CD8-positive, alpha-beta memory T cell (primary cell): ENCODE measurements at regions of chr5 and their contacts with region 1.

Region 1: GRCh38 chr5:141811287-141812155 is 66.7 kb downstream of the PCDH1 start:
- DNase-seq: peak in 3 of 5 donors; percentile 2 to 12 (median 6)
- H3K4me3 ChIP-seq: no peak overlapping the region
- H3K4me3 Mint-ChIP-seq: no peak overlapping the region
- H3K27ac ChIP-seq: no peak overlapping the region
- H3K27ac Mint-ChIP-seq: no peak overlapping the region
- H3K4me1 ChIP-seq: no peaks in the 10 kb centered on the region
- H3K4me1 Mint-ChIP-seq: no peaks in the 10 kb centered on the region
- H3K27me3 ChIP-seq: peaks cover 17% of the 10 kb centered on the region
- H3K27me3 Mint-ChIP-seq: peaks cover 25 to 76% of the 10 kb centered on the region in 2 donors

Region 2: DNA sequence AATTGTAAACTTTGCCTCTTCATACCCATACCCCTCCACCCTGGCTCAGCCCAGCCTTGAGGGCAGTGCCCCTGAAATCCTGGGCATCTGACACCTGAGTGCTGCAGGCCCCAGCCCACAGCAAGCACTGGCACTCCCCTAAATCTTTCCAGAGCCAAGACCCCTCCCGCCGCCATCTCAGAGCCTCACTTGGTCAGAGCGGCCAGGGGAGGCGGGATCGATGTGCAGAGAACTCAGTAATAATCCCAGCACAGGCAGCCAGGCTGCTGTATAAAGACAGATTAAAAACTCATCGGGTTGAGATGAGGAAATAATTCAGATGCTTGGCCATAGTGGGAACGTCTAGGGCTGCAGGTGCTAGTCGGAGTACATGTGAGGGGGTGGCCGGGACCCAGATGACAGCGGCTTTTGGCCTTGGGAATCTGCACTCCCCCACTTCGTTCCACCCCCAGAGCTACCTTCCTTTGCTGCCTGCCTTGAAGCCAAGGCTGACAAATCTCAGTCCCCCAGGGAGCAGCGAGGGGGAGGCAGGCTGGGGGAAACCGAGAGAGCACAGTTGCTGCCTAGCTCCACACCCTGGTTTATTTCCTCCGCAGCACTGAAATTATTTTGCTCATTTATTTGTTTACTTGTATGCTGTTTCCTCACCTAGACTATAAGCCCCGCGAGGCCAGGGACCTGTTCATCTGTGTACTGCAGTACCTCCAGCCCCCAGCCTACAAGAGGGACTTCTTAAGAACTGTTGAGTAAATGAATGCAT is 110.0 kb before region 1 on chr5:
- CTCF ChIA-PET with region 1: interaction called, 11 read pairs
- POLR2A ChIA-PET with region 1: no interaction called
- DNase-seq: no peak
- H3K4me3 ChIP-seq: peak overlapping the region; percentile 16
- H3K4me3 Mint-ChIP-seq: peak overlapping the region in 4 of 7 donors; percentile 11 to 91 (median 62)
- H3K27ac ChIP-seq: no peak overlapping the region
- H3K27ac Mint-ChIP-seq: peak overlapping the region in 6 of 8 donors; percentile 20 to 98 (median 63)
- H3K4me1 ChIP-seq: peaks cover 12% of the 10 kb centered on the region
- H3K4me1 Mint-ChIP-seq: peaks cover 12 to 20% (median 13%) of the 10 kb centered on the region in 3 donors
- H3K27me3 ChIP-seq: peaks cover 18% of the 10 kb centered on the region
- H3K27me3 Mint-ChIP-seq: peaks cover 25 to 40% of the 10 kb centered on the region in 2 donors

Region 3: DNA sequence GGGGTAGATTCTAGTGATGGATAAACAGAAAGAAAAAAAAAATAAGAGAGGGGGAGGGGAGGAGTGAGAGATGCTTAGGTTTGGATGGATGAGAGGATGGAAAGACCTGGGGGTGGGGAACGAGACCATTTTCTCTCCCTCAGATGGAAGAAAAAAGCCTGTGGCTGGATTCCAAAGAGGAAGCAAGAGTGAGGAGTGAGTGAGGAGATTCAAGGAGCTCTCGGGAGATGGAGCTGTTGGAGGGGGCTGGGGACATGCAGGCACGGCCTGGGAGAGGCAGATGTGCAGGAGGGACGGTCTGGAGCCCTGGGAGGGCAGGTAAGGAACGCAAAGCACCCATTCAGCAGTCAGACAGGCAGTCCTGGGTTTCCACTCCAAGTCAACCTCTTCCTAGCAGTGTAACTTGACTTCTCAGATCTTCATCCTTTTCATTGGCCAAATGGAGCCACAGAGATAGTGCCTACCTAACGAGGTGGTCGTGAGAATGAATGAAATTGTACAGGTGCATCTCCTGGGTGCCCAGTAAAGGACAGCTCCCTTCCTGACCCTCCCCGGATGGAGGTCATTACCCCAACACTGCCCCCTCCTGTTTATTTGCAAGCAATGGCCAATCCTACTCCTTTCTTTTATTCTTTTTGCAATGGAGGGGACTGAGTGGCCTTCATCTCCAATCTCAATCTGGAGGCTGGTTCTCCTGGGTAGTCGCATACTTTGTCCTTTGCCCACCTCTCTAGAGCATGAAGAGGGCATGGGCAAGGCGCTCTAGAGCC is 14.5 kb after region 1 on chr5:
- CTCF ChIA-PET with region 1: interaction called, 14 read pairs
- POLR2A ChIA-PET with region 1: no interaction called
- DNase-seq: no peak
- H3K4me3 ChIP-seq: no peak overlapping the region
- H3K4me3 Mint-ChIP-seq: no peak overlapping the region
- H3K27ac ChIP-seq: no peak overlapping the region
- H3K27ac Mint-ChIP-seq: no peak overlapping the region
- H3K4me1 ChIP-seq: no peaks in the 10 kb centered on the region
- H3K4me1 Mint-ChIP-seq: no peaks in the 10 kb centered on the region
- H3K27me3 ChIP-seq: no peaks in the 10 kb centered on the region
- H3K27me3 Mint-ChIP-seq: peaks cover 1 to 13% of the 10 kb centered on the region in 2 donors